Posterior vena cava (tissue), 2 donors: ENCODE measurements at regions of chr9 and their contacts with region 1.

Region 1: DNA sequence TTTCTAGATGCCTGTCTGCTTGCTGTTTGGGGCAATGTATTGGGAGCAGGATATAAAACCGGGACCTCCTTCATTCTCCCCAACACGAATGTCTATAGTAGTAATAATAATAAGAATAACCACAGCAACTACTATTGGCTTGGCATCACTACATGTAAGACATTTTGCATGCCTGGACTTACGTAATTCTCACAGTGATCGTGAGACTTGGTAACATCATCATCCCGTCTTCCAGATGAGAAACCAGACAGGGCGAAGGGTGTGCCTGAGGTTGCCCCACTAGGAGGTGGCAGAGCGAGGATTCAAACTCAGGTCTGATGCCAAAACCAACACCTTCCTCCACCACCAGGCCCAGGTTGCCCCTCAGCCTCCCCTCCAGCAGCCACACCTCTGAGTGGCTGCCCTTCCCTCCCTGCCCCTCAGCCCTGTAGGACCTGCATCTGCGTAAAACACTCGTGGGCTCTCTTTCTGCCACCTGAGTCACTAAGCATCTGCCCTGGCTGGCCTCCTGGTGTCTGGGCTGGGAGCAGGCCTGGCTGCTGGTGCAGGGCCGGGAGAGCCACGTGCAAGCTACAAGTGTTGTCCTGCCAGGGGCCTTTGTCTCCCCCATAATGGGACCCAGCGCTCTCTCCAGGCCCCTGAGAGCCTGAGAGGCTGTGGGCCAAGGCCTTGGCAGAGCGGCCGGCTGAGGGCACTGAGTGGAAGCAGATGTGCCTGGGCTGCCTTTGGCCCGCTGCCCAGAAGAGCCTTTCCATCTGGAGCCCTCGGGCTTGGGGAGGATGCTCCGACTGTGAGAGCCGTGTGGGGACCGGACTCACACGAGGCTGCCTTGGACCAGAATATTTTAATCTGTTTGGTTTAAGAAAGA is 185.3 kb downstream of the RGS3 start:
- DNase-seq: peak; percentile 80

Region 2: DNA sequence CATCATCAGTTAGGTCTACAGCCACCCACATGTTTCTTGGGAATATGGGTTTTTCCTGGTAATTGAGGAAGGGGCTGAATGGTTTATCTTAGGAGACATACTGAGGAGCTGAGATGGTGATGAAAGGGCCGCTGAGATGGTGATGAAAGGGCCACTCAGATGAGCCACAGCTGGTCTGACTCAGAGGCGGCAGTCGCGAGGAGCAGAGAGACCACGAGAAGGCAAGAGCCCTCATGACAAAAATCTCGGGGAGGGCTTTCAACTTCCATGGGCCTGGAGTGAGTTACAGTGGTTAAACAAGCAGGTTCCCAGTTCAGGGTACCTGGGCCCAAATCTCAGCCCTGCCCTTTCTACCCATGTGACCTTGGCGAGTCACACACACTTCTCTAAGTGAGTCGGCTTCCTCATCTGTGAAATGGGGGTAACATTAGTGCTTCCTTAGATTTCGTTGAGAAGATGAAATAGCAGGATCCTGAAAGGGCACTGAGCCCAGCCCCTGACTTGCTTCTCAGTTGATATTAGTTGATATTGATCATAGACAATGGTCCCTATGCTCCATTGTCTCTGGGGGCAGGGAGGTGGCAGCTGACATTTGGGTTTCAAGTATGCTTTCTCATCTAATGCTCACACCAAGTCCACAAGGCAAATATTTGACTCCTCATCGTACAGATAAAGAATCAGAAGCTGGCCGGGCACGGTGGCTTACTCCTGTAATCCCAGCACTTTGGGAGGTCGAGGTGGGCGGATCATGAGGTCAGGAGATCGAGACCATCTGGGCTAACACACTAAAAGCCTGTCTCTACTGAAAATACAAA is 15.8 kb before region 1 on chr9:
- intact Hi-C with region 1: loop called in 1 of 2 experiments (anchors 1 kb)
- DNase-seq: peak; percentile 58